Activated B cell treated with CpG ODN at 0.5 μM for 24 hours (primary cell): ENCODE measurements at regions of chr9 and their contacts with region 1.

Region 1: GRCh38 chr9:137302176-137302994 is at the start of gene NRARP:
- DNase-seq: peak; percentile 95
- ATAC-seq: peak; percentile 85
- H3K4me3 Mint-ChIP-seq: peak within 1 kb of the TSS; percentile 74
- H3K27ac Mint-ChIP-seq: no peak within 1 kb of the TSS
- H3K4me1 Mint-ChIP-seq: peaks cover 16% of the 10 kb centered on the region
- H3K27me3 Mint-ChIP-seq: peaks cover 10% of the 10 kb centered on the region
- CTCF ChIP-seq: no peak
- total RNA-seq, gene NRARP: 1.9 and 3.0 TPM in 2 replicates

Region 2: DNA sequence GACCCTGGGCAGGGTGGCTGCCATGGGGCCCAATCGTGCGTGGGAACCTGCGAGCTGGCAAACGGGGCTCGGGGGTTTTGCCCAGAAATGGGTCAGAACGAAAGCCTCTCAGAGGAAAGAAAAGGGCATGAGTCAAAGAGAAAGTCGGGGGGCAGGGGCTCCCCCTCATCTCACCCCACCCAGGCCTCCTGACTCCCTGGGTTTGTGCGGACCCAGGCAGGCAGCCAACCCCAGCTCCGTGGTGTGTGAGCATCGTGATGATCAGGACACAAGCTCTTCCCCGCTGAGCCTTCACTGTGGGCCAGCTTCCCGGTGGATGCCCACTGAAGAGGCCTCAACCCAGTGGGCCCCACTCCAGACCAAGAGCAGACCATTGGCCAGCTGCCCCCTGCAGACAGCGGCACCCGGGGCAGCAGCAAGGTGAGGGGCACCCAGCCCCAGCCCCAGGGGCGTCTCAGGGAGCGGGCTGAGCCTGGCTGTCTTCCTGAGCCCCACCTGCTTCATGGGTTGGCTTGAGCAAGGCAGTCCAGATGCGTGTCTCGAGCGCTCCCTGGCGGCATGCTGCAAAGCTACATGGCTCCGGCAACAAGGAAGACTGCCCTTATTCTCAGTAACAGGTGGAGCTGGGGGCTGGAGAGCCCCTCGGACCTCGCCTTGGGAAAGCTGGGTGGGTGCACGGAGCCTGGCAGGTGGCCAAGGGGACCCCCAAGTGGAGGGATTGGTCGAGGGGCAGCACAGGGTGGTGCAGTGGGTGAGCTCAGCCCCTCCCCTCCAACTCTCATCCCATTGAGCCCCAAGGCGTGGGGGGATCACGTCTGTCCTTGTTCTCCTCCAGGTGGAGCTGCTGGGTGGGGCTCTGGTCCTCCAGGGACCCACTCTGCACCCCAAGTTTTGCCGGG is 267.3 kb before region 1 on chr9:
- CTCF ChIA-PET with region 1: no interaction called
- POLR2A ChIA-PET with region 1: interaction called, 10 read pairs
- intact Hi-C with region 1: no loop called
- DNase-seq: peak; percentile 82
- ATAC-seq: peak; percentile 65
- H3K4me3 Mint-ChIP-seq: peak overlapping the region; percentile 67
- H3K27ac Mint-ChIP-seq: peak overlapping the region; percentile 75
- H3K4me1 Mint-ChIP-seq: peaks cover 47% of the 10 kb centered on the region
- H3K27me3 Mint-ChIP-seq: no peaks in the 10 kb centered on the region
- CTCF ChIP-seq: no peak

Region 3: GRCh38 chr9:137095664-137096517 is 206.5 kb before region 1 on chr9:
- CTCF ChIA-PET with region 1: no interaction called
- POLR2A ChIA-PET with region 1: no interaction called
- intact Hi-C with region 1: no loop called
- DNase-seq: peak; percentile 49
- ATAC-seq: peak; percentile 97
- H3K4me3 Mint-ChIP-seq: peak overlapping the region; percentile 60
- H3K27ac Mint-ChIP-seq: peak overlapping the region; percentile 83
- H3K4me1 Mint-ChIP-seq: peaks cover 7% of the 10 kb centered on the region
- H3K27me3 Mint-ChIP-seq: no peaks in the 10 kb centered on the region
- CTCF ChIP-seq: no peak

Region 4: GRCh38 chr9:137319011-137319738 is 16.8 kb after region 1 on chr9:
- CTCF ChIA-PET with region 1: interaction called, 17 read pairs
- POLR2A ChIA-PET with region 1: interaction called, 12 read pairs
- intact Hi-C with region 1: no loop called
- DNase-seq: no peak
- ATAC-seq: no peak
- H3K4me3 Mint-ChIP-seq: no peak overlapping the region
- H3K27ac Mint-ChIP-seq: no peak overlapping the region
- H3K4me1 Mint-ChIP-seq: peaks cover 8% of the 10 kb centered on the region
- H3K27me3 Mint-ChIP-seq: peaks cover 2% of the 10 kb centered on the region
- CTCF ChIP-seq: no peak

Region 5: DNA sequence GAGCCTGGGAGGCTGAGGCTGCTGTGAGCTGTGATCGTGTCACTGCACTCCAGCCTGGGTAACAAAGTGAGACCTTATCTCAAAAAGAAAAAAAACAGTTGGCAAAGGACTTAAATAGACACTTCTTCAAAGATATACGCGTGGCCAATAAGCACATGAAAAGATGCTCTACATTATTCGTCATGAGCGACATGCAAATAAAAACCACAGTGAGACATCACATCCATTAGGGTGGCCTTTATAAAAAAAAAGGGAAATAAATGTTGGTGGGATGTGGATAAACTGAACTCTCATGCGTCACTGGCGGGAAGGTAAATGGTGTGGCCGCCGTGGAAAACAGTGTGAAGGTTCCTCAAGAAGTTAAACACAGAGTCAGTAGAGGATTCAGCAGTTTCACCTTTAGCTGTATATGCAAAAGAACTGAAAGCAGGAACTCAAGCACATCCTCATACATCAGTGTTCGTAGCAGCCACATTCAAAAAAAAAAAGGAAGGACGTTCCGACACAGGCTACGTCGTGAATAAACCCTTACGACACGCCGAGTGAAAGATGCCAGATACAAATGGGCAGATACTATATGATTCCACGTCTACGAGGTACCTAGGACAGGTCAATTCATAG is 24.2 kb after region 1 on chr9:
- CTCF ChIA-PET with region 1: interaction called, 5 read pairs
- POLR2A ChIA-PET with region 1: interaction called, 12 read pairs
- intact Hi-C with region 1: loop called (anchors 1 kb)
- DNase-seq: no peak
- ATAC-seq: peak; percentile 94
- H3K4me3 Mint-ChIP-seq: peak overlapping the region; percentile 84
- H3K27ac Mint-ChIP-seq: peak overlapping the region; percentile 89
- H3K4me1 Mint-ChIP-seq: peaks cover 30% of the 10 kb centered on the region
- H3K27me3 Mint-ChIP-seq: peaks cover 10% of the 10 kb centered on the region
- CTCF ChIP-seq: no peak

Region 6: GRCh38 chr9:137406876-137407589 is 104.6 kb after region 1 on chr9:
- CTCF ChIA-PET with region 1: interaction called, 4 read pairs
- POLR2A ChIA-PET with region 1: interaction called, 4 read pairs
- intact Hi-C with region 1: loop called (anchors 1 kb)
- DNase-seq: peak; percentile 55
- ATAC-seq: peak; percentile 81
- H3K4me3 Mint-ChIP-seq: no peak overlapping the region
- H3K27ac Mint-ChIP-seq: no peak overlapping the region
- H3K4me1 Mint-ChIP-seq: peaks cover 21% of the 10 kb centered on the region
- H3K27me3 Mint-ChIP-seq: peaks cover 2% of the 10 kb centered on the region
- CTCF ChIP-seq: no peak

Region 7: GRCh38 chr9:137445275-137445807 is 143.0 kb after region 1 on chr9:
- CTCF ChIA-PET with region 1: interaction called, 7 read pairs
- POLR2A ChIA-PET with region 1: no interaction called
- intact Hi-C with region 1: loop called (anchors 1 kb)
- DNase-seq: peak; percentile 73
- ATAC-seq: peak; percentile 94
- H3K4me3 Mint-ChIP-seq: peak overlapping the region; percentile 24
- H3K27ac Mint-ChIP-seq: no peak overlapping the region
- H3K4me1 Mint-ChIP-seq: peaks cover 8% of the 10 kb centered on the region
- H3K27me3 Mint-ChIP-seq: peaks cover 9% of the 10 kb centered on the region
- CTCF ChIP-seq: peak; percentile 89